Heart right ventricle (tissue), 16 donors: ENCODE measurements at regions of chr3 and their contacts with region 1.

Region 1: DNA sequence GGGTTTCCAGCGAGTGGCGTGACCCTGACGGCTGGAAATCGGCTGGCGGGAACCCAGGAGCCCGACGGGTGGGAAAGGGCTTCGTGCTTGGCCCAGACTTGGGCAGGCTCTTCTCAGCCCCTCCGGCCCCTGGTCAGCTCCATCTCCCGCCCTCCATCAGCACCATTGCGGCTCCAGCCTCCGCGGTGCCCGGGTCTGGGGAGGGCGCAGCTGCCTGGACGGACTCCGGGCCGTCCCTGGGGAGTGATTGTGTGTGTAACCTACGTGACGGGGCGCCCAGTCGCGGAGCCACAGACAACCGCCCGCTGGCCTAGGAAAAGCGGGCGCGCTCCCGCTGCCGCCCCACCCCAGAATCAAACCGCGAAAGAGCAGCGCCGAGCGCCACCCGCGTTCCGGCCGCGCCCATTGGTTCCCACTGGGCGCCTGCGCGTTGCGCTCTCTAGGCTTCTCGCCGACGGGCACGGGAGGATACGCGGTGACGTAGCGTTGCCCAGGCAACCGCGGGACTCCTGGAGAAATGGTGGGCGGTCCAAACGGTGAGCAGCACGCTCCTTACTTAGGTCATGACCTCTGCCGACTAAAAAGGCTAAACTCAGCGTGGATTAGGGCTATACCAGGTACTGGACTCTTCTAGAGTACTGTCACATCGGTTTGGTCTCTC is at the start of gene CFAP20DC:
- DNase-seq: peak; percentile 86 to 92
- ATAC-seq: peak; percentile 97 to 100 (median 98)
- H3K4me3 ChIP-seq: peak within 1 kb of the TSS; percentile 24 to 77 (median 63)
- H3K27ac ChIP-seq: peak within 1 kb of the TSS in 6 of 10 donors; percentile 20 to 83 (median 52)
- H3K4me1 ChIP-seq: peaks cover 0 to 7% (median 4%) of the 10 kb centered on the region in 9 donors
- H3K27me3 ChIP-seq: no peaks in the 10 kb centered on the region
- CTCF ChIP-seq: no peak
- total RNA-seq, gene CFAP20DC: 0.13 to 0.25 (median 0.14) TPM in 3 of 10 donors, not detected in the others

Region 2: DNA sequence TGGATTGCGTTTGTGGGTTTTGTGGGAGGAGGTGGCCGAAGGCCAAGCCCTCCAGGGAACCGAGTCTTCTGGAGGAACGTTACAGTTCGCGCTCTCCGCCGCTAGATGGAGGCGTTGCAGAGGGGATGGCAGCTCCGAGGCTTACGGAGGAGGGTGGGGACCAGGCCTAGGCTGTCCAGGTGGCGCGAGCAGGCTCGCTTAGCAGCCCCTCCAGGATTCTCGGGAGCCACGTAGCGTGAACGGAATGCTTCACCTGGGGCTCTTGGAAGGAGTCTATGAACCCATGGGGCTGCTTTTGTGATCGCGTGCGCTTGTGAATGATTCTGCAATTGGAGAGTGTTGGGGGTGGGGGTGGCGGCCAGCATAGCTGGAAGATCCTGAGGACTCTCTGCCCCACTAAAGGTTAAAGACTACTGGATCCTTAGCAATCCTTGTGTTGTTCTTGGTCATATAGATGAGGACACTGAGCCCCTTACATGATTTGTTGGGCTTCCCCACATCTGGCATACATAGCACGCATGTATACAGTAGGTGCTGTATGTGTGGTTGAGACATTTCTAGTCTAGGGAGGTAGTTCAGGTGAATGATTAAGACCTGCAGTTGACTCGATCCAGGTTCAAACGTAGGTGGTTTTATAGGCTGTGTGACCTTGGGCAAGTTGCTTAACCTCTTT is 409.0 kb before region 1 on chr3:
- intact Hi-C with region 1: loop called in 8 of 10 experiments (anchors 2 to 10 kb)
- DNase-seq: peak; percentile 64 to 81
- ATAC-seq: peak; percentile 84 to 94 (median 88)
- H3K4me3 ChIP-seq: no peak overlapping the region
- H3K27ac ChIP-seq: no peak overlapping the region
- H3K4me1 ChIP-seq: peaks cover 0 to 6% (median 0%) of the 10 kb centered on the region in 9 donors
- H3K27me3 ChIP-seq: peaks cover 0 to 7% (median 0%) of the 10 kb centered on the region in 7 donors
- CTCF ChIP-seq: peak; percentile 67 to 93 (median 87)

Region 3: GRCh38 chr3:58824285-58824684 is 225.5 kb before region 1 on chr3:
- intact Hi-C with region 1: loop called in 4 of 10 experiments (anchors 2 to 10 kb)
- DNase-seq: peak; percentile 28 to 30
- ATAC-seq: no peak
- H3K4me3 ChIP-seq: no peak overlapping the region
- H3K27ac ChIP-seq: no peak overlapping the region
- H3K4me1 ChIP-seq: no peaks in the 10 kb centered on the region
- H3K27me3 ChIP-seq: no peaks in the 10 kb centered on the region
- CTCF ChIP-seq: peak; percentile 4 to 67 (median 50)